Activated naive CD8-positive, alpha-beta T cell treated with anti-CD3 and anti-CD28 coated beads, Interleukin-2, amount 10 ng/mL, durations not matched to agents 7 days and 5 days (primary cell): ENCODE measurements at regions of chr13 and their contacts with region 1.

Region 1: DNA sequence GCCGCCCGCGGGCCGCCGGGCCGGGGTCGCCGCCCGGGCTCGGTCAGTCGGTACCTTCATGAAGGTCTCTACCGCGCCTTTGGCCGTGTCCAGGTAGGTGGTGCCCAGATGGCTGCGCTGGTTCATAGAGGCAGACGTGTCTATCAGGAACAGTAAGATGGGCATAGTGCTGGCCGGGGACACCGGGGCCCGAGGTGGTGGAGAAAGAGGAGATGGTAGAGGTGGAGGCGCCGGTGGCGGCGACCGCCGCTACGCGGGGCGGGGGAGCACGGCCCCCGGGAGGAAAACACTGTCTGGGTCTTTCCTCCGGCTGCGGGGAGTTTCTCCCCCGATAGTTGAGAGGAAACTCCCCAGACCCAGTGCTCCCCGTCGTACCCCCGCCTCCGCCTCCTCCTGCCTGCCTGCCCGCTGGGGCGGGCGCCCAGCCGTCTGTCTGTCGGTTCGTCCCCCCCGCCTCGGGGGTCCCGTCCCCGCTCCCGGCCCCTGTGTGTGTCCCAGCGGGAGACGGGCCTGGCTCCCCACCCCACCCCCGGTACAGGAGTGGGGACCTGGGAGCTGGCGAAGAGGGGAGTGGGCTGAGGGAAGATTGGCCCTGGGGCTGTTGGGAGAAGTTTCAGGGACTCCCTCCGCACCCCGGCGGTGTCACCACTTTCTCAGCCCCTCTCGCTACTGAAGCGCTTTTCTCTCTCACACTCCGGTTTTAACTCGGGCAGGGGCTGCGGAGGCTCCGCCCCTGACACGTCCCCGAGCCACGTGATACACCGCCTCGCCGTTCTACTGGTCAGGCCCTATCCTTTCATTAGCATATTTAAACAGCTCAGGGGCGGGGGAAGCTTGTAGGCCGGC is at the start of gene INTS6:
- DNase-seq: peak; percentile 97
- ATAC-seq: peak; percentile 83
- H3K4me3 Mint-ChIP-seq: peak within 1 kb of the TSS; percentile 93
- H3K27ac Mint-ChIP-seq: peak within 1 kb of the TSS; percentile 98
- H3K4me1 Mint-ChIP-seq: peaks cover 32% of the 10 kb centered on the region
- H3K27me3 Mint-ChIP-seq: no peaks in the 10 kb centered on the region
- total RNA-seq, gene INTS6: 45.5 to 49.7 TPM

Region 2: GRCh38 chr13:51534041-51534817 is 81.6 kb after region 1 on chr13:
- POLR2A ChIA-PET with region 1: interaction called, 26 read pairs
- DNase-seq: peak; percentile 69
- ATAC-seq: peak; percentile 84
- H3K4me3 Mint-ChIP-seq: peak overlapping the region; percentile 55
- H3K27ac Mint-ChIP-seq: peak overlapping the region; percentile 1
- H3K4me1 Mint-ChIP-seq: peaks cover 29% of the 10 kb centered on the region
- H3K27me3 Mint-ChIP-seq: no peaks in the 10 kb centered on the region

Region 3: DNA sequence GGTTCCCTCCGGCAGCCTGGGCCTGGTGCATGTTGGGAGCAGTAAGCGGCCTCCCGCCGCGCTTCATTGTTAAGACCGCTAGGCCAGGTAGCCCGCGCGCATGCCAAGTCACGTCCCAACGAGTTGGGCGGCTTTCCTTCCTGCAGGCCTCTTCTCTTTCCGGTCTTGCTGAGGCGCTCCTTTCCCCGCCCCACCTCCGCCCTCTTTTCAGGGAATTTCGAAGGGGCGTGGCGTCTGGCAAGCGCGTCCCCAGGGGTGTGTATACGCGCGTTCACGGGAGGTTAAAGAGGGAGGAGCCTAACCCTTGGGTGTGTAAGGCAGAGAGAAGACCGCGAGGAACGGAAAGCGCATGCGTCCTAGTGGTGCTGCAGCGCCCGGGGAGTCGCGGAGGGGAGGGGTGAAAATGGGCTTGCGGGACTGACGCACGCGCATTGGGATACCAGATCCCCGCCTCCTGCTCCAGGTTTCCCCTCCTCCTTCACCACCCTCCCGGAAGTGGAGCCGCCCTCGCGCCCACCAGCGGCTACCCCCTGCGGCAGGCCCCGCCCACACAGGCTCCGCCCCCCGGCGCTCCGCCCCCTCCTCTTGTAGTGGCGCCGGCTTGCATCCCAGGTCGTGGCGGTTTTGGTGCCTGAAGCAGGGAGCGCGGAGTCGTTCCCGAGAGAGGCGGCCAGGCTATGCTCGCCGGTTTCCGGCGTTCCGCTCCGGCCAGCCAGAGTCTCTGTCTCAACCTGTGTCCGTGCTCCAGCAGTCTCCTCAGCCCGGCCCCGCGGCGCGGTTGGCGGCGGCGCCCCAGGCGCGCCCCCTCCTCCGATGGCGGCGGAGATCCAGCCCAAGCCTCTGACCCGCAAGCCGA is 131.5 kb after region 1 on chr13 and contains the start of gene WDFY2:
- POLR2A ChIA-PET with region 1: interaction called, 73 read pairs
- DNase-seq: peak; percentile 100
- ATAC-seq: peak; percentile 84
- H3K4me3 Mint-ChIP-seq: peak within 1 kb of the TSS; percentile 93
- H3K27ac Mint-ChIP-seq: peak within 1 kb of the TSS; percentile 96
- H3K4me1 Mint-ChIP-seq: peaks cover 16% of the 10 kb centered on the region
- H3K27me3 Mint-ChIP-seq: peaks cover under 1% of the 10 kb centered on the region
- total RNA-seq, gene WDFY2: 12.7 to 15.5 TPM

Region 4: DNA sequence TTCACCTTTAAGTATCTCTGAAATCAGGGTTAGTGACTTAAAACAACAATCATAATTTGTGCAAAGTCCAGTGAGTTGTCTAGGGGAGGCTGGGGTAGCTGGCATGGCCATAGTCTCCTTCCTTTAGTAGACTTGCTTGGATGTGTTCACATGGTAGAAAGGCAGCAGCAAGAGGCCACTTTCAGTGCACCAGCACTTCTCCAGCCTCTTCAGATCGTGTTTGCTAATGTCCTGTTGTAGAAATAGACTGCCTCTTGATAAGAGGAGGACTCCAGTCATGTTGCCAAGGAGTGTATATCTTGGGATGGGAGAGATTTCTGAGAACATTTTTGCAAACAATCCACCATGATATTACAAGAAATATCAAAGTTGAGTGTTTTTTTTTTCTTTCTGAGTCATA is 154.6 kb after region 1 on chr13:
- POLR2A ChIA-PET with region 1: no interaction called
- DNase-seq: no peak
- ATAC-seq: no peak
- H3K4me3 Mint-ChIP-seq: no peak overlapping the region
- H3K27ac Mint-ChIP-seq: no peak overlapping the region
- H3K4me1 Mint-ChIP-seq: peaks cover 1% of the 10 kb centered on the region
- H3K27me3 Mint-ChIP-seq: no peaks in the 10 kb centered on the region

Region 5: DNA sequence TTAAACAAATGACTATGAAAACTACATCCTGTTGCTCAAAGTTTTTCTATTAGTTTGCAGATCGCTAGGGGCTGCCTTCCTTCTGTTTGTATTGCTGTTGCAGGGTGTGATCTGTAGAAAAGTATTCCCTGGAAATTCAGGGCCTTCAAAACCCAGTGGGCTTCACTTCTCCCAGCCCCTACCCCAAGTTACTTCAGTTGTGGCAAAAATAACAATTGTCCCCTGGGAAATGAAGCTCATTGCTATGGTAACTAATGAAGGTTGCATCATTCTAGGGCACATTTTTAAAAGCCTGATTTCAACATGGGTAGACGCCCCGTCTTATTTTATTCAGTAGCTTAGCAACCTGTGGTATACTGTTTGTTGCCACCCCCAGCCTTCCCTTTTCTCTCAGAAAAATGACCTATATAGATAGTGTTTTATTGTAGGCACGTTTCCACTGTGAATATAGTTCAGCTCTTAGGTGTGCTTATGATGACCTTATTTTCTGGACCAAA is 192.6 kb after region 1 on chr13:
- POLR2A ChIA-PET with region 1: interaction called, 13 read pairs
- DNase-seq: no peak
- ATAC-seq: peak; percentile 52
- H3K4me3 Mint-ChIP-seq: peak overlapping the region; percentile 26
- H3K27ac Mint-ChIP-seq: peak overlapping the region; percentile 47
- H3K4me1 Mint-ChIP-seq: peaks cover 29% of the 10 kb centered on the region
- H3K27me3 Mint-ChIP-seq: no peaks in the 10 kb centered on the region

Region 6: GRCh38 chr13:51803422-51804294 is 351.1 kb after region 1 on chr13 and contains the start of gene DHRS12:
- POLR2A ChIA-PET with region 1: interaction called, 18 read pairs
- DNase-seq: peak; percentile 91
- ATAC-seq: peak; percentile 84
- H3K4me3 Mint-ChIP-seq: peak within 1 kb of the TSS; percentile 87
- H3K27ac Mint-ChIP-seq: peak within 1 kb of the TSS; percentile 99
- H3K4me1 Mint-ChIP-seq: peaks cover 36% of the 10 kb centered on the region
- H3K27me3 Mint-ChIP-seq: no peaks in the 10 kb centered on the region
- total RNA-seq, gene DHRS12: 12.6 to 13.1 TPM